Activated T-helper 1 cell treated with anti-CD3 and anti-CD28 coated beads, Interleukin-12 subunit alpha, Interleukin-12 subunit beta, Interleukin-2, Interleukin-4 antibody, amounts not matched to agents 30 ng/mL and 10 ng/mL and 1 ng/mL, durations not matched to agents 14 hours and 24 hours and 36 hours (primary cell): ENCODE measurements at regions of chr5 and their contacts with region 1.

Region 1: GRCh38 chr5:134132372-134133034 is 18.0 kb downstream of the TCF7 start:
- DNase-seq: peak; percentile 74
- H3K4me3 Mint-ChIP-seq: peak overlapping the region; percentile 64
- H3K27ac Mint-ChIP-seq: peak overlapping the region; percentile 86
- H3K4me1 Mint-ChIP-seq: peaks cover 89% of the 10 kb centered on the region
- H3K27me3 Mint-ChIP-seq: peaks cover 15% of the 10 kb centered on the region

Region 2: GRCh38 chr5:134119720-134120119 is 12.8 kb before region 1 on chr5:
- intact Hi-C with region 1: loop called (anchors 1 kb)
- DNase-seq: no peak
- H3K4me3 Mint-ChIP-seq: peak overlapping the region; percentile 82
- H3K27ac Mint-ChIP-seq: peak overlapping the region; percentile 61
- H3K4me1 Mint-ChIP-seq: peaks cover 72% of the 10 kb centered on the region
- H3K27me3 Mint-ChIP-seq: peaks cover 29% of the 10 kb centered on the region

Region 3: DNA sequence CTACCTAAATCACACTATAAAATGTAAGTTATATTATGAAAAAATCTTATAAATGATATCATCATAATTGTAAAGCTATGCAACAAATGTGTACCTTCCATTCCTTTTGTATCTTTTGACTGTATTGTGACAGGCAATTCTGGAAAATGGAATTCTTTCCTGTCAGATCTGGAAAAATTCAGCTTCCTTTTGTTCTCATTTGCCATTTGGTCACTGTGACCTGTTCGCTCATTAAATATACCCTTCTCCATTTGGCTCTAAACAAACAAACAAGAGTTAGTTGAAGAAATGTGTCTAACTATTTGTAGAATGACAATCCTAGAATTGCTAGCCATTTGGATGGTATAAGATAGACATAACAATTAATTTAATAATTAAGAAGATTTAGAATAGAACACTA is 171.8 kb after region 1 on chr5:
- intact Hi-C with region 1: no loop called
- DNase-seq: no peak
- H3K4me3 Mint-ChIP-seq: no peak overlapping the region
- H3K27ac Mint-ChIP-seq: no peak overlapping the region
- H3K4me1 Mint-ChIP-seq: no peaks in the 10 kb centered on the region
- H3K27me3 Mint-ChIP-seq: peaks cover 2% of the 10 kb centered on the region